Activated CD4-positive, alpha-beta memory T cell treated with anti-CD3 and anti-CD28 coated beads for 36 hours (primary cell): ENCODE measurements at regions of chr19 and their contacts with region 1.

Region 1: DNA sequence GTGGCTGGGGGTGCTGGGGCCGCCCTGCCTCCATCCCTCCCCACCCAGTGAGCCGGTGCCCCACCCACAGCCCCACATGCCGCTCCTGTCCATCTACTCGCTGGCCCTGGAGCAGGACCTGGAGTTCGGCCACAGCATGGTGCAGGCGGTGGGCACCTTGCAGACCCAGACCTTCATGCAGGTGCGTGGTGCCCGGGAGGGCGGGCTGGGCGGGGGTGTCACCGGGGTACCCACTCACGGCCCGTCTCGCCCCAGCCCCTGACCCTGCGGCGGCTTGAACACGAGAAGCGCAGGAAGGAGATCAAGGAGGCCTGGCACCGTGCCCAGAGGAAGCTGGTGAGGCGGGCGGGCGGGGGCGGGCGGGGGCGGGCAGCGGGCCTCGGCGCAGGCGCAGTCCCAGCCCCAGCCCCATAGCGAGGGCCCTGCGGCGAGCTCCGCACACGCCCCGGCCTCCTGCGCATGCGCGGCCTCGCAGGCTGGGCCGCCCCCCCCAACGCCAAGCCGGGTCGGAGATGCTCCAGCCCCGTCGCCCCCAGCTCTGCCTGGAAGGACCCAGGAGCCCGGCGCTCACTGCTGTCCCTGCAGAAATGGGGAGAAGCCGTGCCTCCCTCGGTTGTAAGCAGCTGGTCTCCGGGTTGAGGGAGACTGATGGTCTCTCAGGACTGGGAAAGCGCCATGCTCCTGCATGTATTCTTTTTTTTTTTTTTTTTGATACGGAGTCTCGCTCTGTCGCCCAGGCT is 7.7 kb downstream of the ARHGAP45 start:
- DNase-seq: peak; percentile 91
- H3K4me3 Mint-ChIP-seq: peak overlapping the region; percentile 55
- H3K27ac Mint-ChIP-seq: peak overlapping the region; percentile 90
- H3K4me1 Mint-ChIP-seq: peaks cover 61% of the 10 kb centered on the region
- H3K27me3 Mint-ChIP-seq: no peaks in the 10 kb centered on the region

Region 2: GRCh38 chr19:1039646-1040475 is 34.9 kb before region 1 on chr19 and contains the start of gene ABCA7:
- CTCF ChIA-PET with region 1: no interaction called
- POLR2A ChIA-PET with region 1: no interaction called
- intact Hi-C with region 1: loop called (anchors 2 kb)
- DNase-seq: peak; percentile 99
- H3K4me3 Mint-ChIP-seq: peak within 1 kb of the TSS; percentile 84
- H3K27ac Mint-ChIP-seq: peak within 1 kb of the TSS; percentile 82
- H3K4me1 Mint-ChIP-seq: peaks cover 41% of the 10 kb centered on the region
- H3K27me3 Mint-ChIP-seq: no peaks in the 10 kb centered on the region
- total RNA-seq, gene ABCA7: 28.3 to 29.3 TPM

Region 3: DNA sequence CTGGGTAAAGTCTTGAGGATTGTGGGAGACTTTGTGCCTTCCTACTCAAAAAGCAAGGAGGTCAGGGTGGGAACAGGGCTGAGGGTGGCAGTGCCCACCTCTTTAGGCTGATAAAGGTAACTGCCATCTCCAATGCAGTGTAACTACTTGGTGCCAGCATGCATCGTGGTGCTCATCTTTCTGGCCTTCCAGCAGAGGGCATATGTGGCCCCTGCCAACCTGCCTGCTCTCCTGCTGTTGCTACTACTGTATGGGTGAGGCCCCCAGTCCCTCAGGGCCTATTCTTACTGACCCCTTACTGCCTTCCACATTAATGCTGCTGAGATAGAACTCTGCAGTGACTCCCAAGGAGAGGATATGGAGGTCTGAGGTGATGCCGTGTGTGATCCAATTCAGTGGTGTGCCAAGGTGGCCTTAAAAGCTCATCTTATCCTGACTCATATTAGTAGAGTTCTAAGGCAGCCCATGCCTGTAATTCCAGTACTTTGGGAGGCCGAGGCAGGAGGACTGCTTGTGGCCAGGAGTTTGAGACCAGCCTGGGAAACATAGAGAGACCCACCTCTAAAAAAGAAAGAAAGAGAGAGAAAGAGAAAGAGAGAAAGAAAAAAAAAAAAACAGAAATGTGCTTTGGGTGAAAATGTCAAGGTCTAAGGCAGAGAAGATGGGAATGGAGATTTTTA is 17.4 kb before region 1 on chr19:
- CTCF ChIA-PET with region 1: no interaction called
- POLR2A ChIA-PET with region 1: no interaction called
- intact Hi-C with region 1: no loop called
- DNase-seq: peak; percentile 62
- H3K4me3 Mint-ChIP-seq: no peak overlapping the region
- H3K27ac Mint-ChIP-seq: peak overlapping the region; percentile 40
- H3K4me1 Mint-ChIP-seq: peaks cover 11% of the 10 kb centered on the region
- H3K27me3 Mint-ChIP-seq: no peaks in the 10 kb centered on the region

Region 4: GRCh38 chr19:1087813-1088415 is 13.2 kb after region 1 on chr19:
- CTCF ChIA-PET with region 1: interaction called, 3 read pairs
- POLR2A ChIA-PET with region 1: interaction called, 18 read pairs
- intact Hi-C with region 1: loop called (anchors 1 kb)
- DNase-seq: peak; percentile 51
- H3K4me3 Mint-ChIP-seq: peak overlapping the region; percentile 13
- H3K27ac Mint-ChIP-seq: peak overlapping the region; percentile 81
- H3K4me1 Mint-ChIP-seq: peaks cover 45% of the 10 kb centered on the region
- H3K27me3 Mint-ChIP-seq: no peaks in the 10 kb centered on the region

Region 5: GRCh38 chr19:1094975-1095701 is 20.4 kb after region 1 on chr19 and contains the start of gene POLR2E:
- CTCF ChIA-PET with region 1: interaction called, 7 read pairs
- POLR2A ChIA-PET with region 1: interaction called, 4 read pairs
- intact Hi-C with region 1: loop called (anchors 1 kb)
- DNase-seq: peak; percentile 98
- H3K4me3 Mint-ChIP-seq: peak within 1 kb of the TSS; percentile 93
- H3K27ac Mint-ChIP-seq: peak within 1 kb of the TSS; percentile 91
- H3K4me1 Mint-ChIP-seq: peaks cover 58% of the 10 kb centered on the region
- H3K27me3 Mint-ChIP-seq: no peaks in the 10 kb centered on the region
- total RNA-seq, gene POLR2E: 204 to 207 TPM